ENCODE measurements at regions of chr16 and their contacts with region 1.

Region 1: DNA sequence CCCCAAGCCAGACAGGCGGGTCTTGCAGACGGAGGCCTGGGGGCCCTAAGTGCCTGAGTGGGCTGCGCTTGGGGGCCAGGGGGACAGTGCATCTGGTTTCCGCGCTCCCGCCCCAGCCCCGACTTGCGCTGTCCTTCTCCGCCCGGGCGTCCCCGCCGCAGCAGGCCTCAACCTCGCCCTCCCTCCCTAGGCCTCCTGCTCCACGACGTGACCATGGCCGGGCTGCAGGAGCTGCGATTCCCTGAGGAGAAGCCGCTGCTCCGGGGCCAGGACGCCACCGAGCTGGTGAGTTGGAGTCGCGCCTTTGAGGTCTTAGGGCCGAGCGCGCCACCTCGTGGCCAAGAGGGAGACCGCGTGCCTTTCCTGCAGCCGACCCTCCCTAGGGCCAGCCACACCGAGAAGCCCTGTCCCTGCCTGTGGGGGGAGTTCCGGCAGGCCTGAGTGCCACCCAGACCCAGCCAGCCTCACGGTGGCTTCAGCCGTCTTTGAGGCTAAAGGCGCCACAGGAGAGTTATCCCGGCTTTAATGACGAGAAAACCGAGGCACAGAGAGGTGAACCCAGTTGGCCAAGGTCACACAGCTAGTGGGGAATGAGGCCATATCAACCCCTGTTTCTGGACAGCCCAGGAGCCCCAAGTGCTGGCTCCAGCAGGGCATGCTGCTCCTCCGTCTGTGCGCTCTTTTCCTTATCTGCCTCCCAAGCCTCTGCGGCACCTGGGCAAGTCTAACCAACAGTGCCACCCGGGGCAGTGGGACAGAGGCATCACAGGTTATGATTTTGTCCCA is 12.2 kb upstream of the NDRG4 start:
- DNase-seq: peak; percentile 73
- ATAC-seq: peak; percentile 89
- H3K4me3 Mint-ChIP-seq: no peak overlapping the region
- H3K27ac Mint-ChIP-seq: no peak overlapping the region
- H3K4me1 Mint-ChIP-seq: no peaks in the 10 kb centered on the region
- H3K27me3 Mint-ChIP-seq: peaks cover 3% of the 10 kb centered on the region
- CTCF ChIP-seq: peak; percentile 76

Region 2: GRCh38 chr16:57899771-57900661 is 587.7 kb before region 1 on chr16:
- CTCF ChIA-PET with region 1: no interaction called
- POLR2A ChIA-PET with region 1: no interaction called
- intact Hi-C with region 1: loop called (anchors 2 kb)
- DNase-seq: peak; percentile 48
- ATAC-seq: peak; percentile 68
- H3K4me3 Mint-ChIP-seq: no peak overlapping the region
- H3K27ac Mint-ChIP-seq: no peak overlapping the region
- H3K4me1 Mint-ChIP-seq: no peaks in the 10 kb centered on the region
- H3K27me3 Mint-ChIP-seq: peaks cover 23% of the 10 kb centered on the region
- CTCF ChIP-seq: no peak

Region 3: DNA sequence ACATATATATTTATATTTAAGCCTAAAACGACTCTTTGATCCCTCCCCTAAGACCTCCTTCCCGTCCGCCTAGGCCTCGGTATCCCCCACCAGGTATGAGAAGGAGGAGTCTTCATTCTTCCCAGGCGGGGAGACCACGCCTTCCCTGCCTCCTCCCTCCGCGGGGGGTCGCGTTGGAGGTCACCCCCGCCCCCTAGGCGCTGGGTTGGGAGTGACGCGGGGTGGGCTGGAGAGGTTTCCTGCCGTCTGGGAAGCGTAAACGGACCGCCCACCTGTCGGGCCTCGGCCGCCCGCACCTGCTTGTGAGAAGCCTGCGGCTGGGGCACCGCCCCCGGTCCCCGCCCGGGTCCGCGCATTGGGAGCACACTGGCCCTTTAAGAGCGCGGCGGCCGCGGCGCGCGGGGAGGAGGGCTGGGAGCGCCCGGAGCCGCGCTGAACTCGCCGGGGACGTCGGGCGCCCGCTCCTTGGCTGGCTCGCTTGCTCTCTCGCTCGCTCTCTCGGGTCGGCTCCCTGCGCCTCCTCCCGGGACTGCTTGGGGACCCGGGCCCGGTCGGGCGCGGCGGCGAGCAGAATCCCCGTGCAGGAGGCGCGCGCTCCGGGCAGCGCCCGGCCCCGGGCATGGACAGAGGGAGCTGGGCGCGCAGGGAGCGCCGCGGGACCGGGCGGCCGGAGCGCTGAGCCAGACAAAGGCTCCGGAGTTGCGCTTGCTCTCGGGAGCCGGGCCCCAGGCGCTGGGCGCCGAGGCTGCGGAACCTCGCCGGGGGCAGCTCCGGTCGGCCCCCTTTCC is 462.2 kb before region 1 on chr16 and contains the start of gene MMP15:
- CTCF ChIA-PET with region 1: no interaction called
- POLR2A ChIA-PET with region 1: no interaction called
- intact Hi-C with region 1: loop called (anchors 1 kb)
- DNase-seq: peak; percentile 47
- ATAC-seq: peak; percentile 69
- H3K4me3 Mint-ChIP-seq: peak within 1 kb of the TSS; percentile 84
- H3K27ac Mint-ChIP-seq: peak within 1 kb of the TSS; percentile 36
- H3K4me1 Mint-ChIP-seq: peaks cover 11% of the 10 kb centered on the region
- H3K27me3 Mint-ChIP-seq: peaks cover 23% of the 10 kb centered on the region
- CTCF ChIP-seq: no peak
- total RNA-seq, gene MMP15: 0.60 TPM in 1 of 2 replicates, not detected in the other

Region 4: GRCh38 chr16:58336332-58337089 is 151.2 kb before region 1 on chr16:
- CTCF ChIA-PET with region 1: interaction called, 156 read pairs
- POLR2A ChIA-PET with region 1: interaction called, 3 read pairs
- intact Hi-C with region 1: loop called (anchors 1 kb)
- DNase-seq: peak; percentile 77
- ATAC-seq: peak; percentile 93
- H3K4me3 Mint-ChIP-seq: peak overlapping the region; percentile 60
- H3K27ac Mint-ChIP-seq: no peak overlapping the region
- H3K4me1 Mint-ChIP-seq: peaks cover 6% of the 10 kb centered on the region
- H3K27me3 Mint-ChIP-seq: no peaks in the 10 kb centered on the region
- CTCF ChIP-seq: peak; percentile 96

Region 5: DNA sequence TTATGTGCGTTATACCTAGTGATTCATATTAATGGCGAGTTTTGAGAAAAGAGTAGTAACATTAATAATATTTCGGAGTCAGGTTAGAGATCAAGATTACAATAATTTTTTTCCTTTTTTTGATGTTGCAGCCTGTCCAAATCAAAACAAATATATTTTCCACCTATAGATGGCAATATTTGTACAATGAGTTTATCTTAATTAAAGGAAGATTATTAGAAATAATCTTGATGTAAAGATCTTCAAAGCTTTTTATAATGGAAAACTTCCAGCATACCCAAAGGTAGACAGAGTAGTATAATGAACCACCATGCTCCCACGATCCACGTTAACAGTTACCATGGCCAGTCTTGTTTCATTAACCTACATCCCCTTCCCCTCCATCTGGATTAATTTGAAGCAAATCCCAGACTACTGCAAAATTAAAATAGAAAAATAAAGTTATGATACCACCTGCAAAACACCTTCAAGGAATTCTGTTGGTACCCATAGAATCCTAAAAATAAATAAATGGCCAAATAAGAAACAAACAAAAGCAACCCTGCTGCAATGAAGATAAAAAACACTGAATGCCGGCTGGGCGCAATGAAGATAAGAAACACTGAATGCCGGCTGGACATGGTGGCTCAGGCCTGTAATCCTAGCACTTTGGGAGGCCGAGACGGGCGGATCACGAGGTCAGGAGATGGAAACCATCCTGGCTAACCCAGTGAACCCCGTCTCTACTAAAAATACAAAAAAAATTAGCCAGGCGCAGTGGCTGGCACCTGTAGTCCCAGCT is 142.0 kb before region 1 on chr16:
- CTCF ChIA-PET with region 1: interaction called, 13 read pairs
- POLR2A ChIA-PET with region 1: no interaction called
- intact Hi-C with region 1: loop called (anchors 2 kb)
- DNase-seq: no peak
- ATAC-seq: no peak
- H3K4me3 Mint-ChIP-seq: no peak overlapping the region
- H3K27ac Mint-ChIP-seq: no peak overlapping the region
- H3K4me1 Mint-ChIP-seq: no peaks in the 10 kb centered on the region
- H3K27me3 Mint-ChIP-seq: peaks cover 18% of the 10 kb centered on the region
- CTCF ChIP-seq: no peak

Region 6: DNA sequence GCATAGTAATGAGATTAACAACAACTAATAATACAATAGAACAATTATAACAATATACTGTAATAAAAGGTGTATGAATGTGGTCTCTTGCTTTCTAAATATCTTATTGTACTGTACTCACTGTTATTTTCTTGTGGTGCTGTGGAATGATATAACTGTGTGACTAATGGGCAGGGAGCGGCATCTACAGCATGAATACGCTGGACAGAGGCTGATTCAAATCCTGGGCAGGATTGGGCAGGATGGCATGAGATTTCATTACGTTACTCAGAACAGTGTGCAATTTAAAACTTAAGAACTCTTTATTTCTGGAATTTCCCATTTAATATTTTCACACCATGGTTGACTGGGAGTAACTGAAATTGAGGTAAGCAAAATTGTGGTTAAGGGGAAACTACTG is 1486.2 kb after region 1 on chr16:
- CTCF ChIA-PET with region 1: no interaction called
- POLR2A ChIA-PET with region 1: no interaction called
- intact Hi-C with region 1: no loop called
- DNase-seq: no peak
- ATAC-seq: no peak
- H3K4me3 Mint-ChIP-seq: no peak overlapping the region
- H3K27ac Mint-ChIP-seq: no peak overlapping the region
- H3K4me1 Mint-ChIP-seq: no peaks in the 10 kb centered on the region
- H3K27me3 Mint-ChIP-seq: no peaks in the 10 kb centered on the region
- CTCF ChIP-seq: no peak

Measured in activated B cell treated with CpG ODN at 0.5 μM for 24 hours (primary cell).